HEK293T (cell line): ENCODE measurements at regions of chr17 and their contacts with region 1.

Region 1: GRCh38 chr17:75034236-75034908 is 12.4 kb downstream of the ATP5PD start:
- DNase-seq: peak; percentile 69

Region 2: GRCh38 chr17:74972107-74972972 is 62.0 kb before region 1 on chr17 and contains the start of gene HID1:
- CTCF ChIA-PET with region 1: no interaction called
- POLR2A ChIA-PET with region 1: interaction called, 12 read pairs
- DNase-seq: peak; percentile 93

Region 3: GRCh38 chr17:74981979-74982662 is 52.3 kb before region 1 on chr17:
- CTCF ChIA-PET with region 1: no interaction called
- POLR2A ChIA-PET with region 1: interaction called, 26 read pairs
- DNase-seq: peak; percentile 89

Region 4: GRCh38 chr17:74987418-74987908 is 46.9 kb before region 1 on chr17 and contains the start of gene CDR2L:
- CTCF ChIA-PET with region 1: interaction called, 3 read pairs
- POLR2A ChIA-PET with region 1: interaction called, 26 read pairs
- DNase-seq: peak; percentile 97

Region 5: GRCh38 chr17:75046582-75047289 is 12.4 kb after region 1 on chr17 and contains the starts of genes ATP5PD and KCTD2:
- CTCF ChIA-PET with region 1: no interaction called
- POLR2A ChIA-PET with region 1: interaction called, 31 read pairs
- DNase-seq: peak; percentile 97

Region 6: DNA sequence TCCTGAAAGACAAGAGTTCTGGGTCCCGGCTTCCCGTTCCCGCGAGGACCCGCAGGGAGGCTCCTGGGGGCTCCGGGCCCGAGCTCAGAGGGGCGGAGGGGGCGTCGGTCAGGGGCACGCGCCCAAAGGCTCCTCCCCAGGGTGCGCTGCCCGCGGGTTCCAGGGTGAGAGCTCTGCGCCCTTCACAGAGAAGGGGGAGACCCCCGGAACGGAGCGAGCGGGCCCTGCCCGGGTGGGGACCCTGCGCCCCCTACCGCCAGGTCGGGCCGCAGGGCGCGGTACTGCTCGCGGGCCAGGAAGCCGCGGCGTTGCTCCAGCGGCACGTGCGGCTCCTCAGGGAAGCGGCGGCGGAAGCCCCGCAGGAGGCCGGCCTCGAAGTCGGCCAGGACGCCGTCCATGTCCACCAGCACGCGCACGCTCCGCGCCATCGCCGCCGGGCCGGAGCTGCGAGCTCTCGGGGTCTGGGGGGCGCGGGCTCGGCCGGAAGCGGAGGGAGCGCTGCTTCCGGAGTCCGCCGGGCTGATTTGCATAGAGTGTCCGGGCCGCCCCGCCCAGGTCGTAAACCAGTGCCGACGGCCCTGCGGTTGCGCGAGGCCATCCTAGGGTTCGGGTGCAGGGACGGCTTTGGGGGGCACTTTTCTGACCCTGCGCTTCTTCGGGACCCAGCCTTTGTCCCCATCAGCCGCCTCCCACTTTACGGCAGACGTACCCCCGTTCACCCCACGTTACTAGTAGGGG is 97.1 kb after region 1 on chr17 and contains the start of gene NT5C:
- CTCF ChIA-PET with region 1: interaction called, 3 read pairs
- POLR2A ChIA-PET with region 1: interaction called, 13 read pairs
- DNase-seq: peak; percentile 91